ENCODE measurements at regions of chr2 and their contacts with region 1.

Region 1: DNA sequence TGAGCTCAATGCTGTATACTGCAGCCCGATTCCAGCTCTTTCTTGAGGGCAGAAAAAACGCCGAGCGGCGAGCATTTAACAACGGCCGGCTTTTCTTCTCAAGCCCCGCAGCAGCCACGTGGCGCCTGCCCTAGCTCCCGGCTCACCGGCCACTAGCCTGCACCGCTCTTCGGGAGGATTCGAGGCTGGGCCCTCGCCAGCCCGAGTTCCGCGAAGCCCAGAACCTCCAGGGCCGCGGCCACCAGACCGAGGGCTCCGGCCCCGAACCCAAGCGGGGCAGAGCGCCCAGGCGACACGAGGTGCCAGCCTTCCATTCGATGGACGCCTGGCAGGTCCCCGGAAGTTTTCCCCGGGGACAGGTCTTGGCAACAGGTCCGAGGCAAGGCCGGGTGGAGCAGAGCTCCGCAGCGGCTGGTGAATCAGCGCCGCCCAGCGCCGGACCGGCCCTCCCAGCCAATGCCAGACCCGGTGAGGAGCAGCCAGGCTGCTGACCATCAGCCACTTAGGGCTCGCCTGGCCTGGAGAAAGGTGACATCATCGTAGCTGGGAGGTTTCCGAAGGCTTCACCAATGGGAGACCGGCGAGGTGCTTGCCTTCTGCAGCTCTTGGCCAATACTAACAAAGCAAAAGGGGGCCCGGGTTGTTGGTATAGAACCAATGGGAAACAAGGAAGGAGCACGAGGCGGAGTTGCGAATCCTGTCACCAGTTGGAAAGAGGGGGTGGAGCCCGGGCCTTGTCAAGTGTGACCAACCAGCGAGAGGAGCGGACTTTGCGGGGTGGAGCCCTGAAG is 544 bp upstream of the MXD1 start:
- DNase-seq: peak; percentile 100
- H3K4me3 ChIP-seq: peak overlapping the region; percentile 73
- H3K27ac ChIP-seq: peak overlapping the region; percentile 89
- H3K4me1 ChIP-seq: no peaks in the 10 kb centered on the region
- H3K27me3 ChIP-seq: no peaks in the 10 kb centered on the region
- CTCF ChIP-seq: 0 out of 2 replicates have a peak, but pooled peaks have one; percentile 20

Region 2: GRCh38 chr2:70070541-70071268 is 156.3 kb after region 1 on chr2:
- CTCF ChIA-PET with region 1: interaction called, 5 read pairs
- POLR2A ChIA-PET with region 1: no interaction called
- intact Hi-C with region 1: loop called (anchors 2 kb)
- DNase-seq: peak; percentile 86
- H3K4me3 ChIP-seq: no peak overlapping the region
- H3K27ac ChIP-seq: peak overlapping the region; percentile 10
- H3K4me1 ChIP-seq: no peaks in the 10 kb centered on the region
- H3K27me3 ChIP-seq: no peaks in the 10 kb centered on the region
- CTCF ChIP-seq: peak; percentile 85

Region 3: DNA sequence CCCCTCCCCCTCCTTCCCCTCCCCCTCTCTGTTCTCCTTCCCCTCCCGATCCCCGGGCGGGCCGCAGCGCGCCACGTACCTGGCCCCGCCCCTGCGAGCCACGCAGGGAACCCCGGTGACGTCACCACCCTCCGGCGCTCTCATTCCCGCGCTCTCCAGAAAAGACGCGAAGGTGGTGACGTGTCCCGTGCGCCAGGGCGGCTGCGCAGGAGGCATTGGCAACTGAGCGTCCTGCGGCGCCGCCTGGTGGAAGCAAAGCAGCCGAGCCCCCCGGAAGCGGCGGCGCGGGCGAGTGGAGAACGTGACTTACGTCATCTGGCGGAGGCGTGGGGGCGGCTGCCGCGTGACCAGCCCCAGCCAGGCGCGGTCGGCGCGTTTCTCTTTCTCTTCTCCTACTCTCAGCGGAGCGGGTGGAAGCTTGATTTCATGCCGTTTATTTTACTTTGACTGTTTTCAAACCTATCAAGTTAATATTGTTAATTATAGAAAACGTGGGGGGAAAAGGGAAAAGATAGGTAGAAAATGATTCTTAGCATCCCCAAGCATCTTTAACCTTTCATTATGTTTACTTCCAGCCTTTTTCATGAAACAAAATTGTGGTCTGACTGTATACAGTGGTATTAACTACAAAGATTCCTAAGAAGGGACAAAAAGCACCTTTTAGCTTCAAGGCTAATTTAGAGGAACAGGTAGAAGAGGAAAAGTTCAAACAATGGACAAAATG is 228.4 kb after region 1 on chr2:
- CTCF ChIA-PET with region 1: interaction called, 4 read pairs
- POLR2A ChIA-PET with region 1: no interaction called
- intact Hi-C with region 1: loop called (anchors 1 kb)
- DNase-seq: peak; percentile 100
- H3K4me3 ChIP-seq: peak overlapping the region; percentile 62
- H3K27ac ChIP-seq: peak overlapping the region; percentile 97
- H3K4me1 ChIP-seq: peaks cover 9% of the 10 kb centered on the region
- H3K27me3 ChIP-seq: no peaks in the 10 kb centered on the region
- CTCF ChIP-seq: peak; percentile 98

Region 4: DNA sequence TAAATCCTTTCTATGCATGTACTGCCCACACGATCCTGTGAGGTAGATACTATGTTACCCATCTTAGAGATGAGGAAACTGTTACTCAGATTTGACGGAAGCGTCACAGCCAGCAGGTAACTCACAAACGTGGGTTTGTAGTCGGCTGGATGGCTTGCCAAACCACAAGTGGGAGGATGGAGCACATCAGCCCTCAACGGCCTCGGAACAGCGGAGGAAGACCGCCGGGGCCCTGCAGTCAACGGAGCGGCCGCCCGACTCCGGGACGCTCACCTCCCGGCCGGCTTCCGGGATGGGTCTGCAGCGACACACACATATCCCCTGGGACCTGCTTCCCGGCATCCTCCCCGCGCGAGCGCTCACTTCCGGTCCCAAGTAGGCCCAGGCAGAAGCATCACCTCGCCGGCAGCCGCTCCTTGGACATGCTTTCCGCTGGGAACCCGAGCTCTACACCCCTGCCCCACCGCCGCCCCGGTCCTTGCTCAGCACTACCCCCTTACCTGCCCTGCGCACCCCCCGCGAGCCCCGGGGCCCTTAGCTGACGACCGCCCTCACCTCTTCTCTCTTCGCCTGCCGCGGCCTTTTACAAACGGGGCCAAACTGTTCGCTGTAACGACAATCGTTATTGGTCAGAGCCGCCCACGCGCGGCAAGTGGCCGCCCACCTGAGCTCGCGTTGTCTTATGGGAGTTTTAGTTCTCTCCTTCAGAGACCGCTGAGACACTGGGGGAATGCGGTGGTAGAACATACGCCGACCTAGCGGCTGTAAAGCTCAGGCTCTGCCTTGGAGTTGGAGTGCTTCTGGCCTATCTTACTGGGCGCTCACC is 276.3 kb after region 1 on chr2 and contains the start of gene C2orf42:
- CTCF ChIA-PET with region 1: no interaction called
- POLR2A ChIA-PET with region 1: no interaction called
- intact Hi-C with region 1: loop called (anchors 1 kb)
- DNase-seq: peak; percentile 98
- H3K4me3 ChIP-seq: peak within 1 kb of the TSS; percentile 68
- H3K27ac ChIP-seq: peak within 1 kb of the TSS; percentile 96
- H3K4me1 ChIP-seq: no peaks in the 10 kb centered on the region
- H3K27me3 ChIP-seq: no peaks in the 10 kb centered on the region
- CTCF ChIP-seq: 0 out of 2 replicates have a peak, but pooled peaks have one; percentile 19
- total RNA-seq, gene C2orf42: 15.3 and 17.0 TPM in 2 replicates

Region 5: DNA sequence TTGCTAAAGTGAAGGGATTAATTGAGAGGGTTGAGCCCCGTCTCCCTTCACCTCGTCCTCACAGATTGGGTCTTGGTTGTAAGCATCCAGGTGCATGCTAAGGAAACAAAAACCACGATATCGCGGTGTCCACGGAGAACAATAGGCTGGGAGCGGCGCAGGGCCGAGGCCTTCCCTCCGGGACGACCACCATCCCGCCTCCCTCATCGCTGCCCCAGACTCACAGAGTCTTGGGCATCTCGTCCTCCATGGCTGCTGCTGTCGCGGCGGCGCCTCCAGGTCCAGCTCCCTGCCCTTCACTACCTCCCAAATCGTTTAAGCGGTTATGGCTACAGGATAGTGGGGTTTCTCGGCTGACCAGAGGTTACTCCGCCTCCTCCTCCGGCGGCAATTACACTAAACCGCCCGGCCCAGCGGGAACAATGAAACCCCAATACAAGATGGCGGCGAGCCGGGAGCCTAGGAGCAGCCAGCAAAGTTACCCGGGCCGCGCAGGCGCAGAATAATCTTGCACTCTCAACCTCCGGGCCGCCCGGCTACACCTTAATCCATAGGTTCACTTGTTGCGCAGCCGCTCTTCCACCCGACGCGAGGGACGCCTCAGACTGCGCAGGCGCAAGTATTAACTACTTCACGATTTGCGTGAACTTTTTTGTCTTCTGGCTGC is 333.9 kb after region 1 on chr2 and contains the start of gene TIA1:
- CTCF ChIA-PET with region 1: no interaction called
- POLR2A ChIA-PET with region 1: no interaction called
- intact Hi-C with region 1: loop called (anchors 5 kb)
- DNase-seq: peak; percentile 99
- H3K4me3 ChIP-seq: peak within 1 kb of the TSS; percentile 80
- H3K27ac ChIP-seq: peak within 1 kb of the TSS; percentile 98
- H3K4me1 ChIP-seq: peaks cover 4% of the 10 kb centered on the region
- H3K27me3 ChIP-seq: no peaks in the 10 kb centered on the region
- CTCF ChIP-seq: no peak
- total RNA-seq, gene TIA1: 185 and 197 TPM in 2 replicates

Measured in A673 (cell line).